CD14-positive monocyte (primary cell): ENCODE measurements at regions of chr12 and their contacts with region 1.

Region 1: DNA sequence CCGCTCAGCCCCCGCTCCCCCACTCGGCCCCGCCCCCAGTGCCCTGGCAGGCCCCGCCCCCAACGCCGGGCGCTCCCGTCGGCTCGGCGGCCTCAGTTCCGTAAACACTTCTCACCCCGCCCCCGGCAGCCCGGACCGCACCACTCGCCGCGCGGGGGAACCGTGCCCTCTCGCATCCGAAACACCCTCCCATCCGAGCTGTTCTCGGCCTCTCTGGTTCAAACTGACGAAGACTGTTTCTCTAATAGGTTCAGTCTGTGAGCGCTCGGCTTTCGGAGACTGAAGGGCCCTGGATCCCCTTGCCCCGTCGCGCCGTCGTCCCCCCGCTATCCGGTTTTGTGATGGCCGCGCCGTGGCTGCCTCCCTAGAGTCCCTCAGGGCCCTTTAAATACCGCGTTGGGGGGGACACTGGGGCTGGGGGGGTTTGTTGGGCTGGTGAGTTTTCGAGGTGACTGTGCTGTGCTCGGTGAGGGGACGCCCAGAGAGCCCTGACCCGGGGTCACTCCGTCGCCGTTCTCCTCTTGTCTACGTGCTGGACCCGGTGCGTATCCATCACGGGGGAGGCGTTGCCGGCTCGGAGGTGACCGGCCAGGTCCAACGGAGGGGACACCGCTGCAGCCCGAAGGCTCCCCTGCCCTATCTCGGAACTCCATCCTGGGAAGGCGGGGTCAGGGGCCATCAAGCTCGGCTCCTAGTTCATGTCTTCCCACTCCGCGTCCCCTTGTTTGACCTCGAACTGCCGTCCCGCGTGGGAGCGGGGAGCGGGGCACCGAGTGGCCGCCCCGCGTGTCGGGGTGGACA is at the start of gene TCP11L2:
- DNase-seq: peak; percentile 80 to 83 (median 83)
- H3K4me3 ChIP-seq: peak within 1 kb of the TSS; percentile 74 to 87 (median 86)
- H3K4me3 Mint-ChIP-seq: peak within 1 kb of the TSS; percentile 86 to 92
- H3K27ac ChIP-seq: peak within 1 kb of the TSS; percentile 86 to 98
- H3K27ac Mint-ChIP-seq: peak within 1 kb of the TSS; percentile 98 to 100 (median 99)
- H3K4me1 ChIP-seq: peaks cover 41 to 48% of the 10 kb centered on the region in 2 donors
- H3K4me1 Mint-ChIP-seq: peaks cover 50% of the 10 kb centered on the region
- H3K27me3 ChIP-seq: no peaks in the 10 kb centered on the region
- H3K27me3 Mint-ChIP-seq: no peaks in the 10 kb centered on the region
- CTCF ChIP-seq: no peak
- polyA plus RNA-seq, gene TCP11L2: 23.5 to 37.3 (median 35.8) TPM

Region 2: GRCh38 chr12:106154751-106155273 is 147.8 kb before region 1 on chr12:
- intact Hi-C with region 1: no loop called
- DNase-seq: no peak
- H3K4me3 ChIP-seq: no peak overlapping the region
- H3K4me3 Mint-ChIP-seq: no peak overlapping the region
- H3K27ac ChIP-seq: no peak overlapping the region
- H3K27ac Mint-ChIP-seq: no peak overlapping the region
- H3K4me1 ChIP-seq: no peaks in the 10 kb centered on the region
- H3K4me1 Mint-ChIP-seq: no peaks in the 10 kb centered on the region
- H3K27me3 ChIP-seq: no peaks in the 10 kb centered on the region
- H3K27me3 Mint-ChIP-seq: peaks cover 6 to 11% (median 11%) of the 10 kb centered on the region in 3 donors
- CTCF ChIP-seq: no peak

Region 3: GRCh38 chr12:106342397-106343213 is 40.0 kb after region 1 on chr12:
- intact Hi-C with region 1: loop called in 1 of 2 experiments (anchors 5 kb)
- DNase-seq: no peak
- H3K4me3 ChIP-seq: no peak overlapping the region
- H3K4me3 Mint-ChIP-seq: no peak overlapping the region
- H3K27ac ChIP-seq: no peak overlapping the region
- H3K27ac Mint-ChIP-seq: peak overlapping the region in 1 of 7 donors; percentile 50
- H3K4me1 ChIP-seq: no peaks in the 10 kb centered on the region
- H3K4me1 Mint-ChIP-seq: peaks cover 2% of the 10 kb centered on the region
- H3K27me3 ChIP-seq: no peaks in the 10 kb centered on the region
- H3K27me3 Mint-ChIP-seq: peaks cover 0 to 4% (median 0%) of the 10 kb centered on the region in 3 donors
- CTCF ChIP-seq: no peak

Region 4: DNA sequence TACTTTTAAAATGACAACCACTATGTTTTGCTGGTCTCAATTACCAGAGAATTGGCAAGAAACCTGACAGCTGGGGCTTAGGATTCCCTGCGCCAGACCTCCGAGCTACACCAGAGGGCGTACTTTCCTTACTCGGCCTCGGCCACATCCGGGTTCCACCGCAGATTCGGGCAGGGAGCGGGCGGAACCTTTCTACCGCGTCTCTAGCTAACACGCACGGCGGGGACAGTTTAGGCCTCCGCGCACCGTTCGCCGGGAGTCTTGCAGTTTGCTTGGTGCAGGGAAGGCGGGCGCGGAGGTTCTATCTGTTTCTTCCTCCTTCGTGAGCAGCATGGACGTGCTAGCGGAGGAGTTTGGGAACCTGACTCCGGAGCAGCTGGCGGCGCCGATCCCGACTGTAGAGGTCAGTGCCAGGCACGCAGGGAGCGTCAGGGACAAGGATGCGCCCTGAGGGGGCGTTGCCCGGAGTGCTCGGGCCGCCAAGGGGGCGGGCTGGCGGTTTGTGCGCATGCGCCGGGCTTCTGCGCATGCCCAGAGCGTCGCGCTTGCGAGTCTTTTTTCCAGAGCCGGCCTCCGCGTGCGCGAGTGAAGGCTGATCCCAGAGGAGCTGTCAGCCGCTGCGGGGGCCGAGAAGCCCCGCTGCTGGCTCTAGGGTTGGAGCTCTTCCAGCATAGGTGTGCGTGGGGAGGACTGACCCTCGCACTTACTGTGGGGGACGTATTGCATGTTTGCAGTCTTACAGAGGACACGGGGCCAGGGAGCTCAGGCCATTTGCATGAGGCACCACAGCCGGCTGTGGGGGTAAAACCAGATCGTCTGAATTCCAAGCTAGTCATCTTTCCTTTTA is 55.2 kb after region 1 on chr12 and contains the start of gene POLR3B:
- intact Hi-C with region 1: loop called (anchors 5 kb)
- DNase-seq: peak; percentile 91 to 94 (median 91)
- H3K4me3 ChIP-seq: peak within 1 kb of the TSS; percentile 59 to 82 (median 65)
- H3K4me3 Mint-ChIP-seq: peak within 1 kb of the TSS; percentile 94 to 95
- H3K27ac ChIP-seq: peak within 1 kb of the TSS; percentile 75 to 83
- H3K27ac Mint-ChIP-seq: peak within 1 kb of the TSS; percentile 90 to 97 (median 94)
- H3K4me1 ChIP-seq: peaks cover 17 to 22% of the 10 kb centered on the region in 2 donors
- H3K4me1 Mint-ChIP-seq: peaks cover 18% of the 10 kb centered on the region
- H3K27me3 ChIP-seq: peaks cover 0 to 2% of the 10 kb centered on the region in 2 donors
- H3K27me3 Mint-ChIP-seq: peaks cover 5 to 13% (median 12%) of the 10 kb centered on the region in 3 donors
- CTCF ChIP-seq: peak; percentile 89
- polyA plus RNA-seq, gene POLR3B: 1.7 to 2.6 (median 2.0) TPM